ENCODE measurements at regions of chr11 and their contacts with region 1.

Region 1: DNA sequence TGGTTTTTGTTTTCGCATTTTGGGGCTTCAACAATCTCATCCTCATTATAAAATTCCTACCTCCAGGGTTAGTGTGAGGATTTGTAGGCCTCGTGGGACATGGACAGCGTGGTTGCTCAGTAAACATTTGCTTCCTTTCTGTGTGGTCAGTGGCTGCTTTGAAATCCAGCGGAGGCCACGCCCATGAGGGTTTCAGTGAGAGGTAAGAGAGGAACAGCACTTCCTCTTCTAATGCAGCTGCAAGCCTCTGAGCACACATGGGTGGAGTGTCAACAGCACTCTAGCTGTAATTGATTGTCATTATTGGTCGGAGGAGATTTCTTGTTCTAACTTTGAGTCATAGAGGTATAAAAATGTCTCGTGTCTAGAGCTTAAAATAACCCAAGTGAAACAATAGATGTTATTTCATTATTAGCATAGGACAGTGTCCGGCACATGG is 6.0 kb upstream of the ARHGAP42 start:
- DNase-seq: peak; percentile 88
- CTCF ChIP-seq: no peak

Region 2: DNA sequence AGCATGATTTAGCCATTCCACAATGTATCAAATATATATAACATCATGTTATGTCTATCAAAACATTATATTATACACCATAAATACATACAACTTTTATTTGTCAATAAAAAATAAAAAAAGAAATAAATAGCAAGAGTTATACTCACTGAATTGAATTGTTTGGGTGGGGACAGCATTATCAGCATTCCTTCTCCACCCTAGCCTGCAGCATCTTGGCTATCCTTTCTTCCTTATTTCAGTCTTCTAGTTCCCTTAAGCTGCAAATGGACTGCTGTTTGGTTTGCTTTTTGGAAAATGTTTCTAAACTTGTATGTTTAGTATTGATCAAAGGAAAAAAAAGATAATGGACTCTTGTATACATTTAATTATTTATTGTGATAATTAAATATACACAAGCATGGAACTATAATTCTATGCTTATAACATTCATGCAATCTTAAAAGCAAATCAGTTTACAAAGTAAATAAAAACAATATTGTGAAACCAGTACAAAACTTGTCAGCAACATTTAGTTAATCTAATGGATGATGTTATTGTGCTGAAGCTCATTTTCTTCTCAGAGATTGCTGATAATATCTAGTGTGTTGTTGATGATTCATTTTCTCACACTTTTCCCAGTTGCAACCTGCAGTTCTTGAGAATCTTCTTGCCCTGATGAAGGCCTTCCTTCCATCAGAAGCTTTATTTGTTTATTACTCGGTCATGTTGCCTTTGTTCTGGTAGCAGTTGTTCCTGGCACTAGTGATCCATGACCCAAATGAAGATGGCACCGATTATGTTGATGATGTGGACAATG is 11.0 kb after region 1 on chr11:
- CTCF ChIA-PET with region 1: interaction called, 14 read pairs
- POLR2A ChIA-PET with region 1: no interaction called
- DNase-seq: no peak
- CTCF ChIP-seq: no peak

Measured in GM10248 (cell line).